ENCODE measurements at regions of chr4 and their contacts with region 1.

Region 1: DNA sequence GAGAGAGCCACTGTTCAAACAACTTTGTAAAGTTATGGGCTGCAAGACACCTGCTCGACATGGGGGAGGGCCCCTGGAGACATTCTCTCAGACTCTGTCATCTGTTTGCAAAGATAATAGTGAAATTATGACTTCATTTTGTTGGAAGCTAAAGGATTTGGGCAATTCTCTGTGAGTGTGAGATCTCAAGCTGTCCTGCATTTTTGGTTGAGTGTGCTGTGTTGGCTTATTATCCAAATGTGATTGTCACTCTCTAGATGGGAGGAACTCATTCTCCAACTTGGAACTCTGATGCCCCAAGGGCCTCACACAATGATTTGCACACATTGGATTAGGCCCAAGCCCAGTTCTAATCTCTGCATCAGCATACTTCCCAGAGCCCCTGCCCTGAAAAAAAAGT is 63.7 kb downstream of the STK32B start:
- DNase-seq: peak; percentile 35 to 68
- H3K4me3 ChIP-seq: no peak overlapping the region
- H3K4me3 Mint-ChIP-seq: peak overlapping the region; percentile 82
- H3K27ac Mint-ChIP-seq: peak overlapping the region; percentile 83
- H3K4me1 ChIP-seq: peaks cover 20% of the 10 kb centered on the region
- H3K4me1 Mint-ChIP-seq: peaks cover 31% of the 10 kb centered on the region
- H3K27me3 ChIP-seq: no peaks in the 10 kb centered on the region
- H3K27me3 Mint-ChIP-seq: no peaks in the 10 kb centered on the region
- CTCF ChIP-seq: no peak

Region 2: DNA sequence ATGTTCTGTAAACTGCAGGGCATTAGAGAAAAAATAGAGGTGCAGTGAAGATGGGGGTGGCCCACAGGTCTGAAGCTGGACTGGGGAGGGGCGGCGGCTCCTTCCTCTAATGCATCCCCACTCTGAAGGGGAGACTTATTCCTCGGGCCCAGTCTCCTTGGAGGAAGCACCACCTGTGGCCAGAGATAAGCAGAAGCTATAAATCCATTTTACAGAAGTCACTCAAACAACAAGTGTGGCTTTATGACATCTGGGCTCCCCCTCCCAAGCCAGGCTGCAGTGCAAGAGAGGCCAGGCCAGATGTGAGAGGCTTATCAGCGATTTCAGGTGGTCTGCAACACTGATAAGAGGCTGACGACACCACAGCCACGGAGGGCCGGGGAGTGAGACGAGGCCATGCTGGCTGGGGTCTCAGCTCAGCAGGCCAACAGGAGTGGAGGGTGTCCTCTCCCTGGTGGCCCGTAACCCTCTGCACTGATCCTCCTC is 111.5 kb before region 1 on chr4:
- CTCF ChIA-PET with region 1: no interaction called
- POLR2A ChIA-PET with region 1: no interaction called
- intact Hi-C with region 1: no loop called
- DNase-seq: no peak
- H3K4me3 ChIP-seq: no peak overlapping the region
- H3K4me3 Mint-ChIP-seq: no peak overlapping the region
- H3K27ac Mint-ChIP-seq: no peak overlapping the region
- H3K4me1 ChIP-seq: no peaks in the 10 kb centered on the region
- H3K4me1 Mint-ChIP-seq: no peaks in the 10 kb centered on the region
- H3K27me3 ChIP-seq: no peaks in the 10 kb centered on the region
- H3K27me3 Mint-ChIP-seq: peaks cover 7% of the 10 kb centered on the region
- CTCF ChIP-seq: no peak

Region 3: DNA sequence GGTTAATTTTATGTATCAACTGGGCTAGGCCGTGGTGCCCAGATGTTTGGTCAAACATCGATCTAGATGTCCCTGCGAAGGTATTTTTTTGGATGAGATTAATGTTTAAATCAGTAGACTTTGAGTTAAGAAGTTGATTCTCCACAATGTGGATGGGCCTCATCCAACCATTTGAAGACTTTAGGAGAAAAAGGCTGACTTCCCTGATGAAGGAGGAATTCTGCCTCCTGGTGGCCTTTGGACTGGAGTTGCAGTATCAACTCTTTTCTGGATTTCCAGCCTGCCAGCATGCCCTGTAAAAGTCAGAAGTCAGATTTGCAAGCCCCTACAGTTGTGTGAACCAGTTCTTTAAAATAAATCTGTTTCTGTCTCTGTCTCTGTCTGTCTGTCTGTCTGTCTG is 27.8 kb after region 1 on chr4:
- CTCF ChIA-PET with region 1: no interaction called
- POLR2A ChIA-PET with region 1: no interaction called
- intact Hi-C with region 1: loop called (anchors 2 kb)
- DNase-seq: peak in 1 of 2 experiments; percentile 39
- H3K4me3 ChIP-seq: no peak overlapping the region
- H3K4me3 Mint-ChIP-seq: no peak overlapping the region
- H3K27ac Mint-ChIP-seq: no peak overlapping the region
- H3K4me1 ChIP-seq: no peaks in the 10 kb centered on the region
- H3K4me1 Mint-ChIP-seq: peaks cover 5% of the 10 kb centered on the region
- H3K27me3 ChIP-seq: no peaks in the 10 kb centered on the region
- H3K27me3 Mint-ChIP-seq: no peaks in the 10 kb centered on the region
- CTCF ChIP-seq: peak; percentile 30 to 53

Measured in Caco-2 (cell line).